ENCODE measurements at regions of chr6 and their contacts with region 1.

Region 1: GRCh38 chr6:3281631-3282475 is 23.1 kb downstream of the PSMG4 start:
- DNase-seq: peak in 1 of 2 donors; percentile 23
- ATAC-seq: no peak

Region 2: GRCh38 chr6:3732345-3733141 is 450.7 kb after region 1 on chr6:
- intact Hi-C with region 1: loop called (anchors 2 to 5 kb)
- DNase-seq: peak; percentile 71 to 83
- ATAC-seq: peak; percentile 98

Region 3: DNA sequence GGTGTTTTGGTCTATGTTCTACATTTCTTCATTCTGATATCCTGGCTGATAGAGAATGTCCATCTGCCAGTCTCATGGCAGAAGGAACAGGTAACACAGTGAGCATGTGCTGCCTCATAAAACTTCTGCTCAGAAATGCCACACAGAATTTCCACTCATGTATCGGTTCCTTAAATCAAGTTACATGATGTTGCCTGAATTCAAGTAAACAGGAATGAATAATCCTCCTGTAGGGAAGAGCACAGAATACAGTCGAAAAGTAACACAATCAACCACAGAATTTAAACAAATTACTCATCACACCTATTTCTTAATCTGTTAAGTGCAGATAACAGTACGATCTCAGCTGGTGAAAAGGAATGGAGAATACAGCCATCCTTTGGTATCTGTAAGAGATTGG is 722.4 kb after region 1 on chr6:
- intact Hi-C with region 1: loop called in 1 of 2 experiments (anchors 5 kb)
- DNase-seq: no peak
- ATAC-seq: no peak

Measured in left colon (tissue), 2 donors.